ENCODE measurements at regions of chr13 and their contacts with region 1.

Region 1: GRCh38 chr13:49792550-49793324 is at the start of gene KPNA3:
- DNase-seq: peak; percentile 93
- H3K4me3 ChIP-seq: peak within 1 kb of the TSS; percentile 88
- H3K27ac ChIP-seq: peak within 1 kb of the TSS; percentile 91
- H3K27me3 ChIP-seq: peaks cover 2% of the 10 kb centered on the region
- CTCF ChIP-seq: no peak
- polyA plus RNA-seq, gene KPNA3: 41.4 and 50.7 TPM in 2 replicates

Region 2: DNA sequence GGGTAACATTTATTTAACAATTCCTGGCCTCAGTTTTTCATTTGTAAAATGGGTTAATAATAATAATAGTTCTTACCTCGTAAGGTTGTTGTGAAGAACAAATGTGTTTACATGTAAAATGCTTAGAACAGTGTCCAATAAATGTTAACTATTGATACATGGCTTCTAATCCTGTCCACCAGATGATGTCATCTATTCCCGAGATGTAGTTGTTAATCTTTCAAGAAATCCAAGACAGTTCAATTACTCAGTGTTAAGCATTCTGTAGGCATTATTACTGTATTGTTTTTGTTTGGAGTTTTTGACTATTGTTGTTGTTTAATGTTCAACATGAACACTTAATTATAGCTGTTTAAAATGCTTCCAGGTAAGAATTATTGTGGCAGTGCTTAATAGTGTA is 948.1 kb before region 1 on chr13:
- CTCF ChIA-PET with region 1: interaction called, 10 read pairs
- POLR2A ChIA-PET with region 1: no interaction called
- DNase-seq: no peak
- H3K4me3 ChIP-seq: no peak overlapping the region
- H3K27ac ChIP-seq: no peak overlapping the region
- H3K27me3 ChIP-seq: no peaks in the 10 kb centered on the region
- CTCF ChIP-seq: no peak

Region 3: GRCh38 chr13:49690992-49691886 is 101.5 kb before region 1 on chr13 and contains the start of gene EBPL:
- CTCF ChIA-PET with region 1: interaction called, 6 read pairs
- POLR2A ChIA-PET with region 1: interaction called, 17 read pairs
- DNase-seq: peak; percentile 66
- H3K4me3 ChIP-seq: peak within 1 kb of the TSS; percentile 82
- H3K27ac ChIP-seq: peak within 1 kb of the TSS; percentile 65
- H3K27me3 ChIP-seq: no peaks in the 10 kb centered on the region
- CTCF ChIP-seq: no peak
- polyA plus RNA-seq, gene EBPL: 113 and 131 TPM in 2 replicates

Region 4: GRCh38 chr13:49827336-49827735 is 34.6 kb after region 1 on chr13:
- CTCF ChIA-PET with region 1: interaction called, 3 read pairs
- POLR2A ChIA-PET with region 1: interaction called, 15 read pairs
- DNase-seq: no peak
- H3K4me3 ChIP-seq: no peak overlapping the region
- H3K27ac ChIP-seq: no peak overlapping the region
- H3K27me3 ChIP-seq: peaks cover 2% of the 10 kb centered on the region
- CTCF ChIP-seq: no peak

Region 5: DNA sequence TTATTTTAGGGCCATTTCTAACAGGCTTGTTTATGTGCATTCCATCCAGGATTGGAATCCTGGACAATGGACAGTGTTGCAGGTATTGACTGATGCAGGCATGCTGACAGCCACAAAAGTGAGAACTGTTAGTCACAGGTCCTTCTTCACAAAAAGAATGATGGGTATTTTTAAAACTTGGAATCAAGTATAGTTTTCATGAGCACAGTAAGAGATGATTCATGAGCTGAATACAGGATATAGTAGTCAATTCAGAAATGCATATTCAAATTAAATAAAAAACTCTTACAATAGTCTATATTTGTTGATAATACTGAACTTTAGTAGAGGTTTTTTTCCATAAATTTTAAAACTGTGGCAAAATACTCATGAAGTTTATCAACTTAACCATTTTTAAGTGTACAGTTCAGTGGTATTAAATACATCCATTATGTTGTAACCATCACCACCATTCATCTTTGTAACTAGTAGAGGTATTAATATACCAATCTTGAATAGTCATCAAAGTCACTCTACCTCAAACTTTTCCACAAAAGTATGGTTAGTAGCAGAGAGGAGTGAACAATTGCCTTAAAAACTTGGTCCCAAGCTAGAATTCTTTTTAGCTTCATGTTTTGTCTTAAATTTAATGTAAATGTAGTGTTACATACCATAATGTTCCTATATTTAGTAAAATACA is 302.0 kb after region 1 on chr13:
- CTCF ChIA-PET with region 1: interaction called, 12 read pairs
- POLR2A ChIA-PET with region 1: no interaction called
- DNase-seq: no peak
- H3K4me3 ChIP-seq: no peak overlapping the region
- H3K27ac ChIP-seq: no peak overlapping the region
- H3K27me3 ChIP-seq: no peaks in the 10 kb centered on the region
- CTCF ChIP-seq: no peak